Activated naive CD4-positive, alpha-beta T cell treated with anti-CD3 and anti-CD28 coated beads for 36 hours (primary cell): ENCODE measurements at regions of chr9 and their contacts with region 1.

Region 1: DNA sequence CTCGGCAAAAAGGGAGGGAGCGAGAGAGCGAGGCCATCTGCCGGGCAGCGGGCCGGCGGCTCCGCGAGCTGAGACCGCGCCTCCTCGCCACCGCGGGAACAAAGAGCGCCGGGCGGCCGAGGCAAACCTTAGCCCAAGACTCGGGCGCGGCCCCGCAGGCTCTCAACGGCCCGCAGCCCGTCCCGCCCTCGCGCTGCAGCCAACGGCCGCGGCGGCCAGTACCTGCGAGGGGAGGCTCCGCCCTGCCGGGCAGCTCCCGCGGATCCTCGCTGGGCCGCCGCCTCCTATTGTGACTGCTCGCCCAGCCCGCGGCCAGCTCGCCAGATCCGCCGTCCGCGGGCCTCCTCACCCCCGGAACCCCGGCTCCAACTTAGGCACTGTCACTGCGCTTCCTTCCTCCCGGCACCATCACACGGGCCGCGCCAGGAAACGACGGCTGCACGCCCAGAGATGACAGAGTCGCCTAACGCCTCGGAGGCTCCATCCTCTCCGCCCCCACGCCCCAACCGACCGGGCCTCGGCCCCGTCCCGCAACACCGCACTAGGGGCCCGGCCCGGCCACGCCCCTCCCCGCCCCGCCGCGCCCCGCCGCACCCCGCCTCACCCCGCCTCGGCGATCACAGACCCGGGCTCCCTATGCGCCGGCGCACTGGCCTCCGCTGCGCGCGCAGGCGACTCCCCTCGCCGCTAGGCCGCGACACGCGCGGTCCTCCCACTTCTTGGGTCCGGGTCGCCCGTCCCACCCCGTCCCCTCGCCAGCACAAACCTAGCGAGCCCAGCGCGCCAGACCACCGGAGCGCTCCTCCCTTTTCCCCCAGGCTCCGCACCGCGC is 479 bp upstream of the RNF38 start:
- DNase-seq: peak; percentile 90
- H3K4me3 Mint-ChIP-seq: peak overlapping the region; percentile 86
- H3K27ac Mint-ChIP-seq: peak overlapping the region; percentile 95
- H3K4me1 Mint-ChIP-seq: peaks cover 37% of the 10 kb centered on the region
- H3K27me3 Mint-ChIP-seq: no peaks in the 10 kb centered on the region

Region 2: GRCh38 chr9:36258208-36258988 is 142.2 kb before region 1 on chr9 and contains the start of gene GNE:
- CTCF ChIA-PET with region 1: no interaction called
- intact Hi-C with region 1: loop called (anchors 1 kb)
- DNase-seq: peak; percentile 97
- H3K4me3 Mint-ChIP-seq: peak within 1 kb of the TSS; percentile 93
- H3K27ac Mint-ChIP-seq: peak within 1 kb of the TSS; percentile 81
- H3K4me1 Mint-ChIP-seq: peaks cover 14% of the 10 kb centered on the region
- H3K27me3 Mint-ChIP-seq: no peaks in the 10 kb centered on the region
- total RNA-seq, gene GNE: 14.5 to 15.2 TPM

Region 3: DNA sequence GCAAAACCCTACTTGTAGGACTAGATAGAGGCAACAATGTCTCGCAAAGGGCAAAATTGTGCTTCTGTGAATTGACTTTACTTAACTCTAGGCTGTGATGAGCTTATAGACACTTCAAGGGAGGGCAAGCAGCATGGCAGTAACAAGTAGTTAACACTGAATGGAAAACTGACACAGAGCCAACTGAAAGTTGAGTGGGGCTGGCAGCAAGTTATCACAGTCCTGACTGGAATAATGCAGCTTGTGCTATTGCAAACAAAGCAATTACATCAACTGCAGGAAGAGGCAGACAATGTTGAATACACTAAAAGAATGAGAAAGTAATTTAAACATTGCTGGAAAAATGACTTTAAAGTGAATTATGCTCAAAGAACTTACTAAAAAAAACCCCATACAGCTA is 62.7 kb before region 1 on chr9:
- CTCF ChIA-PET with region 1: interaction called, 5 read pairs
- intact Hi-C with region 1: loop called (anchors 2 kb)
- DNase-seq: no peak
- H3K4me3 Mint-ChIP-seq: no peak overlapping the region
- H3K27ac Mint-ChIP-seq: peak overlapping the region; percentile 15
- H3K4me1 Mint-ChIP-seq: peaks cover 8% of the 10 kb centered on the region
- H3K27me3 Mint-ChIP-seq: no peaks in the 10 kb centered on the region

Region 4: GRCh38 chr9:36382484-36382883 is 18.1 kb before region 1 on chr9:
- CTCF ChIA-PET with region 1: no interaction called
- intact Hi-C with region 1: loop called (anchors 1 kb)
- DNase-seq: no peak
- H3K4me3 Mint-ChIP-seq: no peak overlapping the region
- H3K27ac Mint-ChIP-seq: no peak overlapping the region
- H3K4me1 Mint-ChIP-seq: peaks cover 69% of the 10 kb centered on the region
- H3K27me3 Mint-ChIP-seq: no peaks in the 10 kb centered on the region

Region 5: DNA sequence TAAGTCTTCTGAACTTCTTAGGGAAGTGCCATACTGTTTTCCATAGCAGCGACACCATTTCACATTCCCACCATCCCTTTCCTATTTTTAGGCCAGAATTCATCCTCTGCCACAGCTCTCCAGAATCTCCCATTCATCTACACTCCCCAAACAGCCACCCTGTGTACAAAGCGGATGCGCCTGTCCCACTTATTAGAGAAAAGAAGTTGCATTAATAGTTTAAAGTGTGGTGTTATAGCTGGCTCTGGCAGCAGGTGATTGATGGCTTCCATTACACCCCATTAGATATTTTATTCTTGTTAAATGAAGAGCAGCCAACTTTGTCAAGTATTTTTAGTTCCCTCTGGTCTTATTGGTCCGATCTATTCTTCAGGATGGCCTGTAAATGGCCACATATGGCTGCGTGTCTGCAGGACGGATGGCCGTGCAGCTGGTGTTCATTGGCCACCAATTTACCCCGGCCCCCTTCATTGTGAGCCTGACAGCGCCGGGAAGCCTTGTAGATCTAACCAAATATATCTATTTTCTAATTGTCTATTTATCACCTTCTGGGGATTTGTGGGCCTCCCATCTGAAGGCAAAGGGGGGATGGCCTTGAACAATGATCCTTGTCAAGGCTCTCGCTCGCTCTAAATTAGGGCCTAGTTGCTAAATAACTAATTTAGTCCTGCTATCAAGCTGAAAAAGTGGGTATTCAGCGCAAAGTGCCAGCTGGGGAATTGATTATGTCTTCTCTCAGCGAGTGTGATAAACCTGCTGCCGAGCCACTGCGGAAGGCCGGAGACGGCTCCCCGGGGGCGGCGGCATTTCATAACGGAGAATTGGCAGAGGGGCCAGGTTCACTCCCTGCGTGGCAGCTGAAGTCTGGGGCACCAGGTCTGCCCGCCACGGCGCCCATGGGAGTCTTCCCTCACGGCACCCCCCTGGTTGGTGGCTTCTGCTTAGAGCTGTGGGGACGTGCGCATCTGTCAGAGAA is 313.3 kb after region 1 on chr9:
- CTCF ChIA-PET with region 1: no interaction called
- intact Hi-C with region 1: no loop called
- DNase-seq: no peak
- H3K4me3 Mint-ChIP-seq: no peak overlapping the region
- H3K27ac Mint-ChIP-seq: no peak overlapping the region
- H3K4me1 Mint-ChIP-seq: no peaks in the 10 kb centered on the region
- H3K27me3 Mint-ChIP-seq: peaks cover 3% of the 10 kb centered on the region